Posterior vena cava (tissue), 2 donors: ENCODE measurements at regions of chr14 and their contacts with region 1.

Region 1: GRCh38 chr14:104820669-104821228 is 19.8 kb downstream of the ZBTB42 start:
- DNase-seq: peak; percentile 80

Region 2: GRCh38 chr14:104528496-104529041 is 292.2 kb before region 1 on chr14:
- intact Hi-C with region 1: no loop called
- DNase-seq: peak; percentile 45

Region 3: GRCh38 chr14:104770851-104771272 is 49.9 kb before region 1 on chr14:
- intact Hi-C with region 1: loop called (anchors 5 kb)
- DNase-seq: no peak

Region 4: GRCh38 chr14:104844306-104845032 is 23.7 kb after region 1 on chr14:
- intact Hi-C with region 1: no loop called
- DNase-seq: peak; percentile 75

Region 5: GRCh38 chr14:104895786-104896661 is 75.3 kb after region 1 on chr14:
- intact Hi-C with region 1: no loop called
- DNase-seq: peak; percentile 80